AG04449 (cell line): ENCODE measurements at regions of chr3 and their contacts with region 1.

Region 1: DNA sequence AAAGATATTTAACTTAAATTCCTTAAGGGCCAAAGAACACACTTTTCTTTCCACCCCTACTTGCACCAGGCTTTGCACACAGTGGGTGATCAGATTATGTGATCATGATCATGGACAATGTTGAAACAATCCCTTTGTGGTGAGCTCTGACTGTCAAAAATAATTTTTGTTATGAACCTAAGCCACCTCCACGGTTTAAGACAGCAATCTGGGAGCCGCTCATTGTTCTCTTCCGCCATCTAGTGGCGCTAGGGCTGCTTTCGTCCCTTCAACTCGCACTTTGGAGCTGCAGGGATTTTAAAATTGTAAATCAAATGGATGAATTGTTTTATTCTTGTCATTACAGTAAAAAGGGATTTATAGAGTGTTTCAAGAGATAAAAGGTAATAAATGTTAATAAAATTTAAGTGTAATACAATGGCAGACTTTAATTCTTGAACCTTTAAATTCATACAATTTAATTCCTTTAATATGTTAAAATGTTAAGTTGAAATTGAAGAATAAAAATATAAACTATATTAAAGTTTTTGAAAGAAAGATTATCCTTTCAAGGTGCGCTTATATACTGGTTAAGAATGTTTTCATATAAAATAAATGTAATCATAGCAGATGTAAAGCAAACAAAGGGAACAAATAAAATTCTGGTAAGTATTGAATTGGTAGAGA is 45.3 kb upstream of the ARL6 start:
- DNase-seq: peak; percentile 2
- H3K4me3 ChIP-seq: no peak overlapping the region
- CTCF ChIP-seq: peak; percentile 85

Region 2: GRCh38 chr3:96863129-96863740 is 856.1 kb before region 1 on chr3:
- CTCF ChIA-PET with region 1: interaction called, 17 read pairs
- POLR2A ChIA-PET with region 1: no interaction called
- DNase-seq: no peak
- H3K4me3 ChIP-seq: no peak overlapping the region
- CTCF ChIP-seq: peak; percentile 44

Region 3: GRCh38 chr3:97464035-97464434 is 255.3 kb before region 1 on chr3:
- CTCF ChIA-PET with region 1: no interaction called
- POLR2A ChIA-PET with region 1: no interaction called
- DNase-seq: no peak
- H3K4me3 ChIP-seq: no peak overlapping the region
- CTCF ChIP-seq: no peak

Region 4: GRCh38 chr3:97736928-97737327 is 17.6 kb after region 1 on chr3:
- CTCF ChIA-PET with region 1: interaction called, 16 read pairs
- POLR2A ChIA-PET with region 1: no interaction called
- DNase-seq: no peak
- H3K4me3 ChIP-seq: no peak overlapping the region
- CTCF ChIP-seq: no peak